Activated B cell treated with CpG ODN at 0.5 μM for 24 hours (primary cell): ENCODE measurements at regions of chr4 and their contacts with region 1.

Region 1: DNA sequence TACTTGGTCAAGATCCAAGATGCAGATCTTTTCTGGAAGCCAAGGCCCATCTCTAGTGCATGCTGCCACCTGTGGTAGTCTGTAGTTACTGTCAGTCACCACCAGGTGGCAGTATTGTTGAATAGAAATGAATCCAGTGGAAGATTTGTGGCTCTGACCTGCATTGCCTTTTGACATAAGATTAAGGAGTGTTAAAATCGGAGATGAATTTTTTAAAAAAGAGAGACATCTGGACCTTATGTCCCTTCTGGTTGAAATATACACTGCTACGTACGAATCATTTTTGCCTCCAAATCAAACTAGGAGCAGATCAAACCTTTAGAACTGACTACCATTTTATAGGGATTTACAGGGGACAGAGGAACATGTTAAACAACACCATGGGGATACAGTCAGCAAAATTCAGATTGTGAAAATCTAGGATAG is 46.9 kb upstream of the RHOH start:
- DNase-seq: no peak
- ATAC-seq: peak; percentile 97
- H3K4me3 Mint-ChIP-seq: no peak overlapping the region
- H3K27ac Mint-ChIP-seq: peak overlapping the region; percentile 59
- H3K4me1 Mint-ChIP-seq: peaks cover 38% of the 10 kb centered on the region
- H3K27me3 Mint-ChIP-seq: no peaks in the 10 kb centered on the region
- CTCF ChIP-seq: peak; percentile 57

Region 2: DNA sequence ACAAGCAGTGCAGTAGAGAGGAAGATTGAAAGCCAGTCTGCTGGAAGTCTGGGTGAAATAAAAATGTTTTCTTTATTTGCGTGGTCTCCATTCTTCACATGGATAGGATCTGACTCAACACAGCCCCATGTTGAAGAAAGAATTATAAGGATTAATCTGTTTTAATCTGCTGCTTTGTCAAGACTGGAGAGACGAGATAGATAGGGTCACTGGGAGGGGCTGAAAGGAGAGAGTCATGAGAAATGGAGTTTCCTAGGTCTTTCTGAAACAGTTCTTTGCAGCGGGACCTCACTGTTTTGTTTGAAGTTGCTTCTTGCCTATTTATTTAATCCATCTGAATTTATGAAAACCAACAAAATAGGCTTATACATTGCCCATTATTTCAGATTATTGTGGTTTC is 14.5 kb after region 1 on chr4:
- CTCF ChIA-PET with region 1: interaction called, 3 read pairs
- POLR2A ChIA-PET with region 1: no interaction called
- intact Hi-C with region 1: loop called (anchors 1 kb)
- DNase-seq: no peak
- ATAC-seq: no peak
- H3K4me3 Mint-ChIP-seq: no peak overlapping the region
- H3K27ac Mint-ChIP-seq: no peak overlapping the region
- H3K4me1 Mint-ChIP-seq: peaks cover 2% of the 10 kb centered on the region
- H3K27me3 Mint-ChIP-seq: no peaks in the 10 kb centered on the region
- CTCF ChIP-seq: no peak

Region 3: DNA sequence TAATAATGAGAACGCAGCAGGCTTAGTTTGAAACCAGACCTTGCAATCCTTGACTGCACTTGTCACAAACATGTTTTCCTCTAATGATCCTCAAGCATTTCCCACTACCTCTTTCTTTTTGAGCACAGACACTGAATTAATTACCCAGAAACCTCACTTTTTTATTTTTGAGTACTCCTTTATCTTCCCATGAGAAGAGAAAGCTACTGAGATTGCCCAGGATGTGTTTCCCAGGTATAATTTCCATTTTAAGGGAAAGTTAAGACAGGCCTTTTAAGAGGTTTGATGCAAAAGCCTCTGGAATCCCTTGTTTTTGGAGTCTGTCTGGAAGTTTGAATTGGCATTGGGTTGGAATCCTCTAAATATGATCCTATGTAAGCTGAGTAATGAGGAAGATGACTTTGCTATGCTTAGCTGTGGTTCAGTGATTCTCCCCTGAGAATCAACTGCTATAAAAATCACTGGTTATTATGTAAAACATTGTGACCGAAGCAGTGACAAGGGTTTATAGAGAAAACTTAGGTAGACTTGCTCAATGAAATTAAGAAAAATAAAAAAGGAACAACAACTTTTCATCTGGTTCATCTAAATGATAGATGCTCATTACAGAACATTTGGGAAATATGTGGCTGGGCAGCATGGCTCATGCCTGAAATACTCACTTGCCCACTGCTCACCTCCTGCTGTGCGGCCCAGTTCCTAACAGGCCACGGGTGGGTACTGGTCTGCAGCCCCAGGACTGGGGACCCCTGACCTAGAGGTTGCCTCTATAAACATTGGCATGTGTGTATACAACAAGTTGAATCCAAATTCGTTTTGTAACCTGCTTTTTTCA is 36.1 kb after region 1 on chr4:
- CTCF ChIA-PET with region 1: interaction called, 12 read pairs
- POLR2A ChIA-PET with region 1: interaction called, 53 read pairs
- intact Hi-C with region 1: loop called (anchors 1 kb)
- DNase-seq: no peak
- ATAC-seq: peak; percentile 78
- H3K4me3 Mint-ChIP-seq: peak overlapping the region; percentile 80
- H3K27ac Mint-ChIP-seq: peak overlapping the region; percentile 91
- H3K4me1 Mint-ChIP-seq: peaks cover 88% of the 10 kb centered on the region
- H3K27me3 Mint-ChIP-seq: no peaks in the 10 kb centered on the region
- CTCF ChIP-seq: no peak

Region 4: DNA sequence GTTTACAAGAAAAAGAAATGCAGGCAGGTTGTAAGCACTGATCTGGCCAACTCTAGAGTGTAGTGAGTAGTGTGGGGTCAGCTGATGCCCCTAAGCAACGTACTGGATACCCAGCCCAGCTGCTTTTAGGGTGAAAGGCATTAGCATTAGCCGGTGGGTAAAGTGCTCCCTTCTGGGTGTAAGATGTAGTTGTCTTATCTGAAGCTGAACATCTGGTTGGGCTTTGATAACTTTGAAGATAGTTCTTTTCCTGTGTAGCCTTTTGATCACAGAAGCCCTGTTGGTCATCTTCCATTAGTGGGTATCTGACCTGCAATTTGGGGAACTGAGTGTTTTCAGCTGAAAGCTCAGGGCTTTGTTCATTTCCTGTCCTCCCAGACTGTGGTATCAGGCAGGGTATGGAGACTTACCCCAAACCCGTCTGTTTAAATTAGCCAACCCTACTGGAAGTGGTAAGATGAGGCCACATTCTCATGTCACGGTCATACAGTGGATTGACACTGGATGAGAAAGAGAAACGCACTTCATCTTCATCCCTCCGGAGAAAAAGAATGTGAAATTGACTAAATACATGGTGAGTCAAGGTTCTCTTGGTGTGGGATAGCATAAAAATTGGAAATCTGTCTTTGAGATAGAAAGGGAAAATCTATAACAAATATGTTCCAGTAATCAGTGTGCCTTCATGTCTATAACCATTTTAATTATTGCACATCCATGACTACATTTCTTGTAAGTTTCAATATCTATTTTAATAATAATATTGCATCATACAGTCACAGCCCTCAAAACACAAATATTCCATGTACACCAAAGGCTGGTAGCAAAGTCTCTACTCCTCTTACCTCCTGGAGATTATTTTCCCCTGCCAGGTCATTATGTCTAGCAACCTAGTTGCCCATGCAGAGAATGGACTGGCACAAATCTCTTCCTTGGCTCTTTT is 55.6 kb after region 1 on chr4:
- CTCF ChIA-PET with region 1: interaction called, 16 read pairs
- POLR2A ChIA-PET with region 1: interaction called, 15 read pairs
- intact Hi-C with region 1: no loop called
- DNase-seq: no peak
- ATAC-seq: peak; percentile 51
- H3K4me3 Mint-ChIP-seq: peak overlapping the region; percentile 71
- H3K27ac Mint-ChIP-seq: peak overlapping the region; percentile 92
- H3K4me1 Mint-ChIP-seq: peaks cover 92% of the 10 kb centered on the region
- H3K27me3 Mint-ChIP-seq: no peaks in the 10 kb centered on the region
- CTCF ChIP-seq: no peak

Region 5: GRCh38 chr4:40316782-40317635 is 167.0 kb after region 1 on chr4:
- CTCF ChIA-PET with region 1: interaction called, 29 read pairs
- POLR2A ChIA-PET with region 1: interaction called, 8 read pairs
- intact Hi-C with region 1: loop called (anchors 2 kb)
- DNase-seq: peak; percentile 38
- ATAC-seq: peak; percentile 82
- H3K4me3 Mint-ChIP-seq: peak overlapping the region; percentile 84
- H3K27ac Mint-ChIP-seq: peak overlapping the region; percentile 87
- H3K4me1 Mint-ChIP-seq: peaks cover 28% of the 10 kb centered on the region
- H3K27me3 Mint-ChIP-seq: no peaks in the 10 kb centered on the region
- CTCF ChIP-seq: peak; percentile 48

Region 6: DNA sequence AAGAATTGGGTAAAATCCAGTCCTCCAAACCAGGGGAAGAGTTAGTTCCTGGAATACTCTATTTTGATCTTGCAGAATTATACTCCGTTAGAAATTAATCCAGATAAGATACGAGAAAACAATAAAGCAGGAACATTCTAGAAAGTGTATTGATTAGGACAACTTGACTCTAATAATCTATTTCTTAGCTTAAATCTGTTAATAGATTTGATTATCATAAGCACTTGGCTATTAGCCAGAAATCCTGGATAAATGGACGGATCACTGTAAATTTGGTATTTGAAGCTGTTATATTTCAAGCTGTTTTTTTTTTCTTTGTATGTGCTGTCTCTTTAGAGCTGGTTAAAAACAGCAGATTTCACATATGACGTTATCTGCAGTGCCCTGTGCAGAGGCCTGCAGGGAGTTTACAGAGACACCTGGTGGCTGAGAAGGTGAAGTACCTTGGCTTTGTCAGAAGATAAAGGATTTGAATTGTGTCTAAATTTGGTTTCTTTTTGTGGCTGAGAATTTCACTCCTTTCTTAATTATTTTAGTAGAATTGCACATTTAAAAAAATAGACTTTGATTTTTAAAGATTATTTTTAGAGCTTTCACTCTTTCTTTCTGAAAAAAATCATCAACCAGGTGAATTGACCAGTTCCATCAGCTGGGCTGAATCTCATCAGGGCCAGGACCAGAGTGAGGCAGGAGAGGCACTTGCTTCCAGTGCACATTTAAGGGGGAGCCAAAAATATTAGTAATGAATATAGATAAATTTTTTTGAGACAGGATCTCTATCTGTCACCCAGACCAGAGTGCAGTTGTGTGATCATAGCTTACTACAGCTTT is 175.4 kb after region 1 on chr4:
- CTCF ChIA-PET with region 1: interaction called, 13 read pairs
- POLR2A ChIA-PET with region 1: no interaction called
- intact Hi-C with region 1: loop called (anchors 1 kb)
- DNase-seq: no peak
- ATAC-seq: peak; percentile 100
- H3K4me3 Mint-ChIP-seq: no peak overlapping the region
- H3K27ac Mint-ChIP-seq: no peak overlapping the region
- H3K4me1 Mint-ChIP-seq: peaks cover 14% of the 10 kb centered on the region
- H3K27me3 Mint-ChIP-seq: peaks cover 5% of the 10 kb centered on the region
- CTCF ChIP-seq: no peak

Region 7: GRCh38 chr4:40473578-40474388 is 323.8 kb after region 1 on chr4:
- CTCF ChIA-PET with region 1: no interaction called
- POLR2A ChIA-PET with region 1: no interaction called
- intact Hi-C with region 1: no loop called
- DNase-seq: no peak
- ATAC-seq: no peak
- H3K4me3 Mint-ChIP-seq: no peak overlapping the region
- H3K27ac Mint-ChIP-seq: no peak overlapping the region
- H3K4me1 Mint-ChIP-seq: no peaks in the 10 kb centered on the region
- H3K27me3 Mint-ChIP-seq: no peaks in the 10 kb centered on the region
- CTCF ChIP-seq: no peak

Region 8: GRCh38 chr4:40719008-40719623 is 569.1 kb after region 1 on chr4:
- CTCF ChIA-PET with region 1: no interaction called
- POLR2A ChIA-PET with region 1: no interaction called
- intact Hi-C with region 1: loop called (anchors 2 kb)
- DNase-seq: no peak
- ATAC-seq: no peak
- H3K4me3 Mint-ChIP-seq: no peak overlapping the region
- H3K27ac Mint-ChIP-seq: no peak overlapping the region
- H3K4me1 Mint-ChIP-seq: peaks cover 3% of the 10 kb centered on the region
- H3K27me3 Mint-ChIP-seq: no peaks in the 10 kb centered on the region
- CTCF ChIP-seq: no peak